ENCODE measurements at regions of chr2 and their contacts with region 1.

Region 1: DNA sequence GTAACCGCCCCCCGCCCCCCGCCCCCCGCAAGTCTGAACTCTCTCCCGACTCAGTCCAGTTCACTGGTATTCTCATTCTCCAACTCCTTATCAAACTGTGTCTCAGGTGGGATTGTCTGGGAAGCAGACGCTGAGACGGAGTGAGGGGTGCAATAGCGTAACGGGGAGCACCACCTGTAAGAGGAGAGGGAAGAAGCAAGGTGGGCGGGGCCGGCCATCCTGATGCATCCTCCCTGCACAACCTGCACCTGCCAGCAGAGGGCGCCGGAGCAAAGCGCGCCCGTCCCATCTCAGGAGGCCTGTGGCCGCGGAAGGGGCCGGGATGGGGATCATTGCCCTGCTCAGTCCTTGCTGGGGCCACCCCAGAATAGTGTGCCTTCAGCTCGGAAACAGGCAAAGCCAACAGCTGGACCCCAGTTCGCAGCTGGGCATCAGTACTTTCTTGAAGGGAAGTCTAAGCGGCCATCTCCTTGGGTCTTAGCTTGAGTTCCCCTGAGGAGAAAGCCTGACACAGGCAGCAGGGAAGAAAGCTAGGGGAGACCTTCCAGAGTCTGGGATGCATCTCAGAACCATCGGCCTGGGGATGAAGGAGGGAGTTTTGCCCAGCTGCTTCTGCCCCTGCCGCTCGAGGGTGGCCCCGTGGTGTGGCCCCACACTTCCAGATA is 208.0 kb downstream of the TFCP2L1 start:
- DNase-seq: peak; percentile 79
- H3K4me3 Mint-ChIP-seq: no peak overlapping the region
- H3K27ac Mint-ChIP-seq: no peak overlapping the region
- H3K4me1 Mint-ChIP-seq: peaks cover 6% of the 10 kb centered on the region
- H3K27me3 Mint-ChIP-seq: no peaks in the 10 kb centered on the region
- CTCF ChIP-seq: peak; percentile 93

Region 2: GRCh38 chr2:120686511-120687168 is 390.4 kb before region 1 on chr2:
- CTCF ChIA-PET with region 1: interaction called, 541 read pairs
- POLR2A ChIA-PET with region 1: interaction called, 3 read pairs
- intact Hi-C with region 1: no loop called
- DNase-seq: no peak
- H3K4me3 Mint-ChIP-seq: no peak overlapping the region
- H3K27ac Mint-ChIP-seq: no peak overlapping the region
- H3K4me1 Mint-ChIP-seq: peaks cover 10% of the 10 kb centered on the region
- H3K27me3 Mint-ChIP-seq: peaks cover 18% of the 10 kb centered on the region
- CTCF ChIP-seq: peak; percentile 53

Region 3: GRCh38 chr2:120956486-120957156 is 120.4 kb before region 1 on chr2:
- CTCF ChIA-PET with region 1: no interaction called
- POLR2A ChIA-PET with region 1: no interaction called
- intact Hi-C with region 1: no loop called
- DNase-seq: no peak
- H3K4me3 Mint-ChIP-seq: no peak overlapping the region
- H3K27ac Mint-ChIP-seq: no peak overlapping the region
- H3K4me1 Mint-ChIP-seq: no peaks in the 10 kb centered on the region
- H3K27me3 Mint-ChIP-seq: no peaks in the 10 kb centered on the region
- CTCF ChIP-seq: no peak

Region 4: DNA sequence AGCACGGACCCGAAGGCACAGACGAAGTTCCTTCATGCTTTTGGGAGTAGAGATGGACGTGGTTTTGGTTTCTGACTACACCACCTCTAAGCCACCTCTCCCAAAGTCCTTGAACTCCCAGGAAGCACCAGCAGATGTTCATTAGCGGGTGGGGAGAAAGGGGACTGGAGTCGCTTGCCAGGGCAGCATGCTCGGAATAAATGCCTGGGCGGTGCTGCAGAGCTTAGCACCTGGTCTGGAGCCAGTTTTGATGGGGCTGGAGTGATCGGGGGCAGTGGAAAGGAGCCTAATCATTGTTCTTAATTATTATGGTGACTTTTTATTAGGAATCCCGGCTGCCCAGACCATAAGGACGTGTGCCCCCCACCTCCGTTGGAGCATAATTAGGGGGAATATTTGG is 12.8 kb before region 1 on chr2:
- CTCF ChIA-PET with region 1: interaction called, 10 read pairs
- POLR2A ChIA-PET with region 1: no interaction called
- intact Hi-C with region 1: no loop called
- DNase-seq: no peak
- H3K4me3 Mint-ChIP-seq: no peak overlapping the region
- H3K27ac Mint-ChIP-seq: no peak overlapping the region
- H3K4me1 Mint-ChIP-seq: no peaks in the 10 kb centered on the region
- H3K27me3 Mint-ChIP-seq: peaks cover 45% of the 10 kb centered on the region
- CTCF ChIP-seq: no peak

Region 5: DNA sequence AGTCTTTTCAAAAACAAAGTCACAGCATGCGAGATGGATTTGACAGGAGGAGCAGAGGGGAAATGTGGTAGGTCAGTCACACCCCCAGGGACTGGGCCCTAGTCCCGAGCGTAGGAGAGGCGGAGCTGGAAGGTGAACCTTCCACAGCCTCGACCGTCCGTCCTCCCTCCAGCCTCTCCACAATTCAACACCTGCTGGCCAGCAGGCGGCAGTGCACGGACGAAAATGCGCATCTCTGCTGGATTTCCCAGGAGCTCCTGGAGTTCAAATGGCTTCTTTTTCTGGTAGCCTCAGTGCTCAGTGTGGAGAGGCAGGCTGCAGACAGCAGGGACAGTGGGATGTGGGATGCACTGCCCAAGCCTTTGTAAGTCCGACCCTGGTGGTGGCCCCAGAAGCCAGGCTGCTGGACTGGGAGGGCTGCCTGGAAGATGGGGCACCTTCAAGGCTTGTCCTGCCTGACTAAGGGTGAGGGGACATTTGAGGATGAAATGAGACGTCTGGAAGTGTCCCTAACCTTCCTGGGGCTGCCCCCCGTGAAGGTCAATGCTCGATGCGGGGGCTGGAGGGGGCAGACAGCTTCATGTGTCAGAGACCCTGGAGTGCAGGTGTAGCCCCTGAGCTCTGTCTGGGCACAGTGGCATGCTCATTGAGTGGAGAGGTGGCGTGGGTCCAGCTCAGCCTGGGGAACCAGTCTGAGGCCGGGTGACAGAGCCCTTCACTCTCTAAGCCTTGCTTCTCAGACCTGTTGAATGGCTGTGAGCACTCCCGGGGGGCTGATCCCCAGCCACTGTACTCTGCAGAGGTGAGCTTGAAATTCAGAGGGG is 18.5 kb after region 1 on chr2:
- CTCF ChIA-PET with region 1: interaction called, 17 read pairs
- POLR2A ChIA-PET with region 1: no interaction called
- intact Hi-C with region 1: no loop called
- DNase-seq: peak; percentile 81
- H3K4me3 Mint-ChIP-seq: no peak overlapping the region
- H3K27ac Mint-ChIP-seq: no peak overlapping the region
- H3K4me1 Mint-ChIP-seq: peaks cover 26% of the 10 kb centered on the region
- H3K27me3 Mint-ChIP-seq: no peaks in the 10 kb centered on the region
- CTCF ChIP-seq: peak; percentile 94

Region 6: DNA sequence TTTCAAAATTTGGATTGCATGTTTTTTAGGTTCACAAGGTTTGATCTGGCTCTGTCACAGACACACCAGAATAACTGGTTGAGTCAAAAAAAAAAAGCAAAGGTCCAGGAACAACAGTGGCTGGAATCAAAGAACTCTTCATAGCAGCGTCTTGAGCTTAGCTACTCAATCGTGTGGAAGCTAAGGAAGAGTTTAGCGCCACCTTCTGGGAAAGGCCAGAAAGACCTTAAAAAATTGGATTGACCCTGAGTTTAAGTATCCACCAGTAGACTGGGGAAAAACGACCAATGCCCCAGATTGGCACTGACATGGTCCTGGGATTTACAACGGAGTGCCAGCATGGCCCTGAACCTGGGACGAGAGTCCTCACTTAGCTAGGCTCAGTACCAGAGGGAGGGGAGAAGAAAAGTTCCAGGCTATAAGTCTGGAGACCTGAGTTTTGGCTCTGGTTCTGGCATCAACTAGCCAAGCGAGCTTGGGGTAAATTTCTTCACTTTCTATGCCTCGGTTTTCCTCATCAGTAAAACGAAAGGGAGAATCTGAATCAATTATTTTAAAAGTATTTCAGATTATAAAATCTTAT is 279.1 kb after region 1 on chr2:
- CTCF ChIA-PET with region 1: interaction called, 65 read pairs
- POLR2A ChIA-PET with region 1: interaction called, 3 read pairs
- intact Hi-C with region 1: no loop called
- DNase-seq: peak; percentile 81
- H3K4me3 Mint-ChIP-seq: no peak overlapping the region
- H3K27ac Mint-ChIP-seq: peak overlapping the region; percentile 39
- H3K4me1 Mint-ChIP-seq: peaks cover 23% of the 10 kb centered on the region
- H3K27me3 Mint-ChIP-seq: no peaks in the 10 kb centered on the region
- CTCF ChIP-seq: peak; percentile 62

Measured in MCF 10A (cell line).